ENCODE measurements at regions of chr21 and their contacts with region 1.

Region 1: GRCh38 chr21:45287438-45288391 is at the start of gene POFUT2:
- DNase-seq: peak; percentile 99
- ATAC-seq: peak; percentile 86
- H3K4me3 Mint-ChIP-seq: peak within 1 kb of the TSS; percentile 75
- H3K27ac Mint-ChIP-seq: no peak within 1 kb of the TSS
- H3K4me1 Mint-ChIP-seq: peaks cover 15% of the 10 kb centered on the region
- H3K27me3 Mint-ChIP-seq: no peaks in the 10 kb centered on the region
- total RNA-seq, gene POFUT2: 14.7 to 14.9 TPM

Region 2: DNA sequence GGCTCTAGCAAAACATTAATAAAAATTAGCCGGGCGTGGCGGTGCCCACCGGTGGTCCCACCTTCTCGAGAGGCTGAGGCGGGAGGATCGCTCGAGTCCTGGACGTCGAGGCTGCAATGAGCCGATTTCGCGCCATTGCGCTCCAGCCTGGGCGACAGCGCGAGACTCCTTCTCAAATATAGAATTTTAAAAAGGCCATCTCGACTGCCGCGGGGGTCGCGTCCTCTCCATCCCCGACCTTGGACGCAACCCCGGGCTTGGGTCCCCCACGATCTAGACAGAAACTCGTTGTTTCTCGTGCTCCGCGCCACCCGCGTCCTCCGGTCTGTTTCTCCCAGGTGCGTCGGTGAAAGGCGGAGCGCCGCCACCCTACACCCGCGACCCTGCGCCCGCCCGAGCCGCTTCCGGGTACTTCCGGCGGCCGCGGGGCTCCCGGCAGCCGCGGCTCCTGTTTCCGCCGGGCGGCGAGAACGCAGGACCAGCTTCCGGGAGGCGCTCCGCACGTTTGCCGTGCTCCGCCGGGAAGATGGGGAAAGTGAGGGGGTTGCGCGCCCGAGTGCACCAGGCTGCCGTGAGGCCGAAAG is 348.1 kb before region 1 on chr21 and contains the start of gene SLX9:
- CTCF ChIA-PET with region 1: no interaction called
- POLR2A ChIA-PET with region 1: no interaction called
- intact Hi-C with region 1: loop called in 1 of 2 experiments (anchors 5 kb)
- DNase-seq: peak; percentile 91
- ATAC-seq: peak; percentile 96
- H3K4me3 Mint-ChIP-seq: peak within 1 kb of the TSS; percentile 88
- H3K27ac Mint-ChIP-seq: peak within 1 kb of the TSS; percentile 86
- H3K4me1 Mint-ChIP-seq: peaks cover 37% of the 10 kb centered on the region
- H3K27me3 Mint-ChIP-seq: no peaks in the 10 kb centered on the region
- total RNA-seq, gene SLX9: 60.8 to 68.8 TPM

Region 3: GRCh38 chr21:45152265-45152746 is 135.4 kb before region 1 on chr21:
- CTCF ChIA-PET with region 1: interaction called, 5 read pairs
- POLR2A ChIA-PET with region 1: no interaction called
- intact Hi-C with region 1: loop called (anchors 1 to 10 kb)
- DNase-seq: peak; percentile 87
- ATAC-seq: peak; percentile 99
- H3K4me3 Mint-ChIP-seq: peak overlapping the region; percentile 63
- H3K27ac Mint-ChIP-seq: peak overlapping the region; percentile 78
- H3K4me1 Mint-ChIP-seq: peaks cover 37% of the 10 kb centered on the region
- H3K27me3 Mint-ChIP-seq: no peaks in the 10 kb centered on the region

Region 4: DNA sequence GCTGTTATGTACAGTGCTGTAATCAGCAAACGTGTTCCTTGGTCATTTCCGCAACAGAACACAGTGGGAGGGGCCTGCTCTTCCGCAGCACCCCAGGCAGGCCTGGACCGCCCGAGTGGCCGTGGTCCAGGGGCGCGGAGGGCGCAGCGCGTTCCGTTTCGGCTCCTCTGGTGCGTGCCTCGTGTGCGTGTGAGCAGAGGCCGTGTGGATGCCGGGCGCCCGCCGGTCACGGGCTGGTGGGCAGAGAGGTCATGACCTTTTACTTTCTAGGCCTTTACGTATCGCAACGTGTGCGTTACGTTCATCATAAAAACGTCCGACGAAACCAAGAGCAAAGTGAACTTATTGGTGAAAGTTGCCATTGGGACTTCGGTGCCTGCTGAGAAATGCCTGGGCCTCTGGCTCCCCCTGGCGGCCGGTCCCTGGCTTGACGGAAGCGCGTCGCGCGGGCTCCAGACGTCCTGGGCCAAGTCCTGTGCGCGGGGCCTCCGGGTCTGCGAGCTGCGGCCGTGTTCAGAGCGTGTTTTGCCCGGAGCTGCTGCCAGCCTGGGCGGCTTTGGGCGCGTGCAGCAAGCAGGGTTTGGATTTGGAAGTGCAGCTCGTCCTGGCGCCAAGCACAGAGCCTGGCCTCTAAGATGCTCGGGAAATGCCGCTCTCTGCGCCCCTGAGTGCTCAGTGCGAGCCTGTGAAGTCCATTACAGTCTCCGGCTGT is 151.6 kb after region 1 on chr21:
- CTCF ChIA-PET with region 1: interaction called, 10 read pairs
- POLR2A ChIA-PET with region 1: no interaction called
- intact Hi-C with region 1: loop called (anchors 1 kb)
- DNase-seq: peak; percentile 92
- ATAC-seq: peak; percentile 90
- H3K4me3 Mint-ChIP-seq: peak overlapping the region; percentile 41
- H3K27ac Mint-ChIP-seq: no peak overlapping the region
- H3K4me1 Mint-ChIP-seq: peaks cover 4% of the 10 kb centered on the region
- H3K27me3 Mint-ChIP-seq: peaks cover 3% of the 10 kb centered on the region

Region 5: GRCh38 chr21:45542242-45542666 is 254.5 kb after region 1 on chr21 and contains the start of gene SLC19A1:
- CTCF ChIA-PET with region 1: no interaction called
- POLR2A ChIA-PET with region 1: no interaction called
- intact Hi-C with region 1: loop called in 1 of 2 experiments (anchors 1 kb)
- DNase-seq: peak; percentile 86
- ATAC-seq: peak; percentile 86
- H3K4me3 Mint-ChIP-seq: peak within 1 kb of the TSS; percentile 80
- H3K27ac Mint-ChIP-seq: peak within 1 kb of the TSS; percentile 80
- H3K4me1 Mint-ChIP-seq: peaks cover 20% of the 10 kb centered on the region
- H3K27me3 Mint-ChIP-seq: no peaks in the 10 kb centered on the region
- total RNA-seq, gene SLC19A1: 46.1 to 50.0 TPM

Measured in activated CD4-positive, alpha-beta T cell treated with anti-CD3 and anti-CD28 coated beads for 36 hours (primary cell).